Prostate gland (tissue), 2 donors: ENCODE measurements at regions of chr22 and their contacts with region 1.

Region 1: DNA sequence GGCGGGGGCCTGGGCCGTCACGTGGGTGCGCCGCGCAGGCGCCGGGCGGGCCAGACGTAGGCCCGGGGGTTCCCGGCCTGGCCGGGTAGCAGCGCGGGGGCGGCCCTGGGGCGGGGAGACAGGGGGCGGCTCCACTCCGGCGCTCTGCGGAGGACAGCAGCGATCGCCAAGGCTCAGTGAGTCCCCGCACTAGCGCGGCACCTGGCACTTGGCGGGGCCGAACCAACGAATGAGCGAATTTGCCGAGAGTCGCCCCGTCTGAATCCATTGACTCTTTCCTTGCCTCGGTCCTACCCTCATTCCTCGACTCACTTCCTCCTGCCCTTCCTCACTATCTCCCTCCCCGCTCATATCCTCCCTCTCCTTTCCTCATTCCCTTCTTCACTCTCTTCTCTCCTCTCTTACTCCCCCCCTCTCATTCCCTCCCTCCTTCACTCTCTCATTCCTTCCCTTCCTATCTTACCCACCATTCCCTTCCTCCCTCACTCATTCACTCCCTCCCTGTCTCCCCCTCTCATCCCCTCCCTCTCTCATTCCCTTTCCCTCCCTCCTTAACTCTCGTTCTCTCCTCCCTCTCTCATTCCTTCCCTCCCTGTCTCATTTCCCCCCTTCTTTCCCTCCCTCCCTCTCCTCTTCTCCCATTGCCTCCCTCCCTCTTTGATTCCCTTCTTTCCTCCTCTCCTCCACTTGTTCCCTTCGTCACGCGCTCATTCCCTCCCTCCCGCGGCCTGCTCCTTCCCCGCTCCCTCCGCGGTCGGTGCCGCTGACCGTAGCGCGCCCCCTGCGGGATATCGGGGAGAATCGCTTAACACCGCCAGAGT is 476 bp upstream of the KLHL22 start:
- DNase-seq: peak; percentile 91
- H3K4me3 ChIP-seq: peak overlapping the region; percentile 58 to 81
- H3K27ac ChIP-seq: peak overlapping the region; percentile 97
- H3K4me1 ChIP-seq: no peaks in the 10 kb centered on the region
- H3K27me3 ChIP-seq: no peaks in the 10 kb centered on the region
- CTCF ChIP-seq: peak; percentile 75 to 92 (median 92)
- POLR2A ChIP-seq: peak; percentile 90

Region 2: DNA sequence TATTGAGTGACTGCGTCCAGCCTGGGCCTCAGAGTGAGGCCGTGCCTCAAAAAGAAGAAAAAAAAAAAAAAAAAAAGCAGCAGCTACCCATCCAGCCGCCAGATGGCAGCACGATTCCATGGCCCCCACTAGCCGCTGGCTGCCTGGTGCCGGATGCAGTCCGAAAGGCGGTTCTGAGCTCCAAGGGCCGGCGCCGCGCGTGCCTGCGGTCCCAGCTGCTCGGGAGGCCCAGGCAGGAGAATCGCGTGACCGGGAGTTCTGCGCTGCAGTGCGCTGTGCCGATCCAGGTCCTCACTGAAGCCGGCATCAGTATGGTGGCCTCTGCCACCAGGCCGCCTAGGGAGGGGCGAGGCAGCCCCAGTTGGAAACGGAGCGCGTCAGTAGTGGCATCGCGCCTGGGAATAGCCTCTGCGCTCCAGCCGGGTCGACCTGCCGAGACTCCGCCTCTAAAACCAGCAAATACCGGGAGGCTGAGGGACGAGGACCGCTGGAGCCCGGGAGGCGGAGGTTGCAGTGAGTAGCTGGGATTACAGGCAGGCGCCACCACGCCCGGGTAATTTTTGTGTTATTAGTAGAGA is 77.8 kb before region 1 on chr22:
- intact Hi-C with region 1: loop called (anchors 5 kb)
- DNase-seq: peak; percentile 70
- H3K4me3 ChIP-seq: peak overlapping the region; percentile 10 to 24
- H3K27ac ChIP-seq: peak overlapping the region in 1 of 2 donors; percentile 45
- H3K4me1 ChIP-seq: no peaks in the 10 kb centered on the region
- H3K27me3 ChIP-seq: no peaks in the 10 kb centered on the region
- CTCF ChIP-seq: peak; percentile 73 to 79 (median 74)
- POLR2A ChIP-seq: no peak

Region 3: DNA sequence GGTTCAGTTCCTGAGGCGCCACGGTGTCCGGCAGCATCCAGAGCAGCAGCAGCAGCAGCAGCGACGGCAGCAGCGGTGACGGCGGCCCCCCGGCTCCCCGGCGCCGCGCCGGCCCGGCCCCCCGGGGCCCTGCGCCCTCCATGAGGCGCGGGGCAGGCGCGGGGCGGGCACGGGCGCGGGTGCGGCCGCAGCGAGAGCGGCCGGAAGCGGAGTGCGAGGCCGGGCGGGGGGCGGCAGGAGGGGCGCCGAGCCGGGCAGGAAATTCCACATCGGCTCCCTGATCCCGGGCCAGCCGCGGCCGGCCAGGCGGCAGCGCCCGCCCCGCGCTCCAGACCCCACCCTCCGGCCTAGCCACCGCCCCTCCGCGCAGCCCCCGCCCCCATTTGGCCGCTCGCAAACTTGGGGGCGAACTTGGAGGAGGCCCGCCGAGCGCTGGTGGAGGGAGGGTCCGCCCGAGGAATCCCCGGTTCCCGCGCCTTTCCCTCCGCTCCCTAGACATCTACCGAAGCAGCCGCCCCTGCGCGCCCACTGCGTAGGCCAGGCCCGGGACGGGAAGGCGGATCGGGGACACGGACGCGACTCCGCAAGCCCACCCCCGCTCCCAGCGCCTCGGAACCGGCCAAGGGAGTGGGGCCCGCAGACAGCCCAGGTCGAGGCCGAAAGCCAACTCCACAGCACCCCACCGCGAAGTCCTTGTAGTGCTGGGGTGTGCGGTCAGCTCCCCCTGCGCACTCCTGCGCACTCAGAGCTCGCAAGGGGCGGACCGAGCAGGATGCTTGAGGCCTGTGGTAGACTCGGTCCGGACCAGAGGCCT is 58.3 kb before region 1 on chr22 and contains the start of gene SCARF2:
- intact Hi-C with region 1: loop called (anchors 5 kb)
- DNase-seq: no peak
- H3K4me3 ChIP-seq: peak within 1 kb of the TSS; percentile 41 to 55
- H3K27ac ChIP-seq: peak within 1 kb of the TSS; percentile 79 to 82
- H3K4me1 ChIP-seq: peaks cover 6% of the 10 kb centered on the region
- H3K27me3 ChIP-seq: no peaks in the 10 kb centered on the region
- CTCF ChIP-seq: no peak
- POLR2A ChIP-seq: no peak
- total RNA-seq, gene SCARF2: 12.8 to 28.6 TPM

Region 4: DNA sequence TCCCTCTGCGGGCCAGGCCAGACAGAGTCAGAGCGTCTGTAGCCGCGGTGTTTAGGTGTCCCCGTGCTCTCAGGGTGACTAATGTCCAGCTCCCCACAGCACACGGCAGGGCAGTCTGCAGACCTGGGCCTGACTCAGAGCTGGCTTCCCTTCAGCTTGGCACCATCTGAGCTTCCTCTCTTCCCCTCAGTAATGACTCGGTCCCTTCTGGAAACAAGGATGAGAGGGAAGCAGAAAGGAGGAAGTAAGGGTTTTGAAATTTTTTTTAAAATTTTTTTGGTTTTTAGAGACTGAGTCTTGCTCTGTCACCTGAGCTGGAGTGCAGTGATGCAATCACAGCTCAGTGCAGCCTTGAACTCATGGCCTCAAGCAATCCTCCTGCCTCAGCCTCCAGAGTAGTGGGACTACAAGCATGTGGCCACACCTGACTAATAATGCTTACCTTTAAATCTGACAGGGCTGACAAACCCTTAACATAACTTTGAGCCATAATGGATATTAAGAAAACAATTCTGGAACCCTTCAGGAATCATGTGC is 578.2 kb after region 1 on chr22:
- intact Hi-C with region 1: no loop called
- DNase-seq: no peak
- H3K4me3 ChIP-seq: no peak overlapping the region
- H3K27ac ChIP-seq: no peak overlapping the region
- H3K4me1 ChIP-seq: no peaks in the 10 kb centered on the region
- H3K27me3 ChIP-seq: no peaks in the 10 kb centered on the region
- CTCF ChIP-seq: no peak
- POLR2A ChIP-seq: no peak